GM10248 (cell line): ENCODE measurements at regions of chr3 and their contacts with region 1.

Region 1: DNA sequence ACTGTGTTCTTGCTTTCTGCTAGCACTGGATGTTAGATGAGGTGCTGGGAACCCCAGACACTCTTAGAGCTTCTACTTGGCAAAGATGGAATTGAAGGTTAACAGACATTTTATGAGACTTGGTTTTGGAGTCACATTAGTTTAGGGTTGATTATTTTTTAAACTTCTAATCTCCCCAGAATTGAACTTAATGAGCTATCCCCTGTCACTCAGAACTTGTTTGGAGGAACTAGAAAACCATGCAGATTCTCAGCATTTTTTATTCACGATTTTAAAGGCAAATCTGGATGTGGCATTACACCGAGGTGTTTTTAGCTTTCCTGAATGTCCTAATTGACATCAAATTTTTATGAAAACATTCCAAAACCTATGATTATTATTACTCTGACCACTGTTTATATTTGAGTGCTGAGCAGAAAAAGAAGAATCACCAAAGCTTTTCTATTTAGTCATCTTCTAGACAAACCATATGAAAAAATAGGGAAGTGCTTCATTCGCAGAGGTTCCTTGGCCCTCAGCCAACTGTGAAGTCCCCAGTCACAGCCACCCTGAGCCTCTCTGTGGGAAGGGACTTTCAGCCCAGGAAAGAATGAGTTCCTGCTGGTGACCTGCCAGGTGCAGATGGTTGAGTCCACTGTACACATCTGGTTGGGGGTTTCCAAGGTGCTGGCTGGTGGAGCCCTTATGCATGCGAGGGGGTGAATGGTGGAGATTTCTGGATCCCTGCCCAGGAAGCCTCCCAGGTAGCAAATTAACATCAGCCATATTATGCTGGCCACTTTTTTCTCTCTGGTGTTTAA is 196.0 kb upstream of the TOPAZ1 start:
- DNase-seq: peak; percentile 76
- CTCF ChIP-seq: no peak

Region 2: GRCh38 chr3:44033127-44033526 is 12.5 kb before region 1 on chr3:
- CTCF ChIA-PET with region 1: interaction called, 15 read pairs
- POLR2A ChIA-PET with region 1: interaction called, 4 read pairs
- DNase-seq: no peak
- CTCF ChIP-seq: no peak